Mucosa of descending colon (tissue), 3 donors: ENCODE measurements at regions of chr1 and their contacts with region 1.

Region 1: GRCh38 chr1:44835738-44836675 is 7.0 kb downstream of the PTCH2 start:
- DNase-seq: peak; percentile 84 to 95 (median 90)
- ATAC-seq: peak; percentile 91
- H3K4me3 ChIP-seq: no peak overlapping the region
- H3K4me1 ChIP-seq: no peaks in the 10 kb centered on the region
- CTCF ChIP-seq: peak; percentile 83

Region 2: DNA sequence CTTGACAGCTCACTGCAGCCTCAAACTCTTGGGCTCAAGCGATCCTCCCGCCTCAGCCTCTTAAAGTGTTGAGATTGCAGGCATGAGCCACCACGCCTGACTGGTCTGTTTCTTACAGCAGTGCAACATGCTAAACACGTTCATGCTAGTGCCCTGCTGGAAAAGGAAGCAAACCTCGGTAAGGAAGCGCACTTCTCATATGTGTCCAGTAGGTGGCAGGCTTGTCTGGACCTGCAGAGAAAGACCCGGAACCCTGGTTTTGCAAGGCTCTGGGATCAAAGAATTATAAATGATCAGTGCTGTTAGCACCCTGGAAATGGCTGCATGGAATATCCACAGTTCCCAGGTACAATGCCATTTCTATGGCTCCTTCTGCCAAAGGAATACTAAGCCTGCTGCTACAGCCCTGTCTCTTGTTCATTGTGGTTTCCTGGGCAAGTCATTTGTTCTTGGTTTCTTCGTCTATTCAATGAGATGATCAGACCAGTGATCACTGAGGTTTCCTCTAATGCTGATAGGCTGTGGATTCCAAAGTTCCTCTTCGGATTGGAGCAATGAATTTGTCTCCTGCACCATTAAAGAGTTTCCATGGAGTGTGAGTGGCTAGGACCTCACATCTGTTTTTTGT is 120.9 kb before region 1 on chr1:
- intact Hi-C with region 1: no loop called
- DNase-seq: peak in 2 of 3 donors; percentile 64 to 81
- ATAC-seq: peak; percentile 94
- H3K4me3 ChIP-seq: no peak overlapping the region
- H3K4me1 ChIP-seq: no peaks in the 10 kb centered on the region
- CTCF ChIP-seq: peak; percentile 83

Region 3: DNA sequence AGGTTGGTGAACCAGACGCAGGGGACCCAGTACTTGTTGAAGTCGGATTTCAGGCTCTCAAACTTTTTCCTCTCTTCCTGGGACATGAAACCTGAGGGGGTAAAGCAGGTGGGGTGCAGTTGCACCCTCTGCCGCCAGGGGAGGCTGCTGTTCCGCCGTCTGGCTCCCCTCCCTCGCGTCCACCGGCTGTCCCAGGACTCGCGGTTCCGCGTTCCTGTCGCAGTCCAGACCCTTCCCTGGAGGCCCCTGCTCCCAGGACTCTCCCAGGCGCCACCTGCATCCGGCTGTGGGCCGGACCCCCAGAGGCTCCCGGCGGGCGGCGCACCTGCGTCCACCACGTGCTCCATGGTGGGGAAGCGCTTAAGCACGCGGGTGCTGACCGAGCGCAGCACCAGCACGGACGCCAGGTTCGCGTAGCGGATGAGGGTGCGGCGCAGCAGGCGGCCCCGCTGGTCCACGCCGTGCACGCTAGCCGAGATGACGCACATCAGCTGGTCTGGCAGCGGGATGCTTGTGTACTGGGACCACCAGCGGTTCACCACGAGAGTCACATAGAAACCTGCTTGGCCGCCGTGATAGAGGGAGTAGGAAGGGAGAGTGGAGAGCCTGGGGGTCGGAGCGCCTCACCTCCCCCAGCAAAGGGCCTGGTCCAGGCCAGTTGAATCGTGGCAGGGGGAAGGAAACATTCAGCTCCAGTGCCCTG is 49.7 kb before region 1 on chr1:
- intact Hi-C with region 1: loop called (anchors 5 to 10 kb)
- DNase-seq: peak; percentile 81 to 88 (median 83)
- ATAC-seq: peak; percentile 88
- H3K4me3 ChIP-seq: no peak overlapping the region
- H3K4me1 ChIP-seq: peaks cover 16% of the 10 kb centered on the region
- CTCF ChIP-seq: peak; percentile 99

Region 4: GRCh38 chr1:44792783-44793714 is 43.0 kb before region 1 on chr1:
- intact Hi-C with region 1: loop called (anchors 5 to 10 kb)
- DNase-seq: peak in 1 of 3 donors; percentile 19
- ATAC-seq: no peak
- H3K4me3 ChIP-seq: no peak overlapping the region
- H3K4me1 ChIP-seq: no peaks in the 10 kb centered on the region
- CTCF ChIP-seq: no peak